WTC11 (cell line): ENCODE measurements at regions of chr16 and their contacts with region 1.

Region 1: GRCh38 chr16:1300664-1301476 is 8.6 kb upstream of the UBE2I start:
- DNase-seq: peak; percentile 83
- ATAC-seq: peak; percentile 70
- H3K4me3 Mint-ChIP-seq: no peak overlapping the region
- H3K27ac Mint-ChIP-seq: no peak overlapping the region
- H3K4me1 Mint-ChIP-seq: peaks cover 20% of the 10 kb centered on the region
- H3K27me3 Mint-ChIP-seq: peaks cover 11% of the 10 kb centered on the region
- CTCF ChIP-seq: peak; percentile 89

Region 2: DNA sequence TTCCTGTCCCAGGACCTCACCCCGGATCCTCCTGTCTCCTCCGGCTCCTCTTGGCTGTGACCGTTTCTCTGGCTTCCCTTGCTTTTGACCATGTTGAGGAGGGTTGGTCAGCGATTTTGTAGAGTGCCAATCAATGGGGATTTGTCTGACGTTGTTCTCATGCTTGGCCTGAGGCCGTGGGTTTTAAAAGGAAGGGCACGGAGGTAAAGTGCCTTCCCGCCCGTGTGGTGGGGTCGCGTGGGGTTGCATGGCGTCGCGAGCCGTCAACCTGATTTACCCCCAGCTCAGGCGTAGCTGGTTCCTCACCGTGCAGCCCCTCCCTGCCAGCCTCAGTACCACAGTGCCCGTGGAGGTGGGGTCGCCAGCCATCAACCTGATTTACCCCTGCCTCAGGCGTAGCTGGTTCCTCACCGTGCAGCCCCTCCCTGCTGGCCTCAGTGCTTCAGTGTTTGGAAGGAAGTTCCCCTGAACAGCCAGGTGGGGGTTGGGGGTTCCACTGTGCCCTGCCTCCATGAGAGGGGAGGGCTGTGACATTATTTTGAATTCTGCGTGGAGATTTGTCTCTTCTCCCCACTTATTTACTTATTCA is 55.3 kb before region 1 on chr16:
- CTCF ChIA-PET with region 1: no interaction called
- POLR2A ChIA-PET with region 1: no interaction called
- DNase-seq: no peak
- ATAC-seq: no peak
- H3K4me3 Mint-ChIP-seq: no peak overlapping the region; the same call in 1 of the 2 replicates
- H3K27ac Mint-ChIP-seq: no peak overlapping the region
- H3K4me1 Mint-ChIP-seq: no peaks in the 10 kb centered on the region; the same call in 1 of the 2 replicates
- H3K27me3 Mint-ChIP-seq: peaks cover 27% of the 10 kb centered on the region
- CTCF ChIP-seq: no peak

Region 3: GRCh38 chr16:1288611-1289474 is 12.0 kb before region 1 on chr16:
- CTCF ChIA-PET with region 1: interaction called, 48 read pairs
- POLR2A ChIA-PET with region 1: no interaction called
- DNase-seq: peak; percentile 52
- ATAC-seq: peak; percentile 63
- H3K4me3 Mint-ChIP-seq: peak overlapping the region; percentile 53
- H3K27ac Mint-ChIP-seq: no peak overlapping the region
- H3K4me1 Mint-ChIP-seq: peaks cover 18% of the 10 kb centered on the region
- H3K27me3 Mint-ChIP-seq: peaks cover 60% of the 10 kb centered on the region
- CTCF ChIP-seq: no peak

Region 4: DNA sequence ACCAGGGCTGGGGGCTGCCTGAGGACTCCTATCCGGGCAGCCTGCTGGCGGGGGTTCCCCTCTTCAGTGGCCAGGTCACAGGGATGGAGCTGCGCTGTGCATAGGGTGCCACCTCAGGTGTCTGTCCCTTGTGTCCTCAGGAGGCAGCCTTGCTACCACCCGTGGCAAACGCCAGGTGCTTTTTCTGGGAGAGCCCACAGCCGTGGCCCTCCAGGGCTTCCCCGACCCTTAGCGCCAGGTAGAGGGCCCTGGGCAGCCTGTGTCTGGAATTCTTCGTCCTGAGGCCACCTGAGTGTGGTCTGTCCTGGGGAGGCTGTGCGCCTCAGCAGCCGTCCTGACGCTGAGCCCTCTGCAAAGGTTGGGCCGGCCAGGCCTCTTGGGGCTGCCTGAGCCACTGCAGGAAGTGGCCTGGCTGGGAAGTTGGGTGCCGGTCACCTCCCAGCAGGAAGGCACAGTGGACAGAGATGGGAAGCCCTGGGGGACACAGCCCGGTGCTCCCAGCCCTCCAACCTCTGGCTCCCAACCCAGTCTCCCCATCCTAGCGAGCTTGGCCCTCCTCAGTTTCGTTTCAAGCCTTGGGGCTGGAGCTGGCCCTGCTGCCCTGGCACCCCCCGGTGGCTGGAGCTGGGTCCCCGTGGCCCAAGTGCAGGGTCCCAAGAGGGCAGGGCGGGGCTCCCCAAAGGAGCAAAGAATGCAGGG is 25.0 kb after region 1 on chr16:
- CTCF ChIA-PET with region 1: interaction called, 15 read pairs
- POLR2A ChIA-PET with region 1: no interaction called
- DNase-seq: no peak
- ATAC-seq: peak; percentile 13
- H3K4me3 Mint-ChIP-seq: no peak overlapping the region
- H3K27ac Mint-ChIP-seq: no peak overlapping the region
- H3K4me1 Mint-ChIP-seq: peaks cover 5% of the 10 kb centered on the region; the same call in 1 of the 2 replicates
- H3K27me3 Mint-ChIP-seq: no peaks in the 10 kb centered on the region
- CTCF ChIP-seq: no peak

Region 5: DNA sequence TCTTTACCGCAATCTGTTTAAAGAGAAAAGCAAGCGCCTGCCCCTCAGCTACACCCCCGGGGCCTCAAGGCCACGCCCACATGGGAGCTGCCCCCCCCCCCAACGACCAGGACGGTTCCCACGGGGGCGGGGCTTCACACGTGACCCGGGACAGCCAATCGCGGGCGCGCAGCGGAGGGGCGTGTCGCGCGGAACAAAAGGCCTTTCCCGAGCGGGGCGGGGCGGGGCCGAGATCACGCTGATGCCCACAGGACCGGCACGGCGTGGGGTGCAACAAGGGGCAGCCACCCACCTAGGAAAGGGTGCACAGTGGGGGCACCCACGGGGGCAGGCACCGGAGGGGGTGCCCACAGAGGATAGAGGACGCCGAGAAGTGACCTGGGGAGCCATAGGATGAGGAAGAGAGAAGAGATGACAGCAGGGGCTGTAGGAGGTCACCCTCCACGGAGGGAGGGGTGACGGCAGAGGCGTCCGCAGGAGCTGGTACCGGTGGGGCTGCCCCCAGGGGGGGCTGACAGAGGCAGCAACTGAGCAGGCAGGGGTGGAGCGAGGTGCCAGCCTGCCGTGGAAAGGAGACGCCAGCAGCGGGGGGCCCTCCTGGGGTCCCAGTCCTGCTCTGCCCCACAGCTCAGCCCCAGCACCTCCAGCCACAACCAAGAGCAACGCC is 107.4 kb after region 1 on chr16:
- CTCF ChIA-PET with region 1: no interaction called
- POLR2A ChIA-PET with region 1: no interaction called
- DNase-seq: peak; percentile 93
- ATAC-seq: peak; percentile 84
- H3K4me3 Mint-ChIP-seq: peak overlapping the region; percentile 72
- H3K27ac Mint-ChIP-seq: no peak overlapping the region
- H3K4me1 Mint-ChIP-seq: no peaks in the 10 kb centered on the region
- H3K27me3 Mint-ChIP-seq: no peaks in the 10 kb centered on the region
- CTCF ChIP-seq: no peak

Region 6: GRCh38 chr16:1458336-1458976 is 157.6 kb after region 1 on chr16:
- CTCF ChIA-PET with region 1: no interaction called
- POLR2A ChIA-PET with region 1: no interaction called
- DNase-seq: no peak
- ATAC-seq: no peak
- H3K4me3 Mint-ChIP-seq: no peak overlapping the region
- H3K27ac Mint-ChIP-seq: no peak overlapping the region
- H3K4me1 Mint-ChIP-seq: no peaks in the 10 kb centered on the region
- H3K27me3 Mint-ChIP-seq: no peaks in the 10 kb centered on the region
- CTCF ChIP-seq: no peak